ENCODE measurements at regions of chr1 and their contacts with region 1.

Region 1: DNA sequence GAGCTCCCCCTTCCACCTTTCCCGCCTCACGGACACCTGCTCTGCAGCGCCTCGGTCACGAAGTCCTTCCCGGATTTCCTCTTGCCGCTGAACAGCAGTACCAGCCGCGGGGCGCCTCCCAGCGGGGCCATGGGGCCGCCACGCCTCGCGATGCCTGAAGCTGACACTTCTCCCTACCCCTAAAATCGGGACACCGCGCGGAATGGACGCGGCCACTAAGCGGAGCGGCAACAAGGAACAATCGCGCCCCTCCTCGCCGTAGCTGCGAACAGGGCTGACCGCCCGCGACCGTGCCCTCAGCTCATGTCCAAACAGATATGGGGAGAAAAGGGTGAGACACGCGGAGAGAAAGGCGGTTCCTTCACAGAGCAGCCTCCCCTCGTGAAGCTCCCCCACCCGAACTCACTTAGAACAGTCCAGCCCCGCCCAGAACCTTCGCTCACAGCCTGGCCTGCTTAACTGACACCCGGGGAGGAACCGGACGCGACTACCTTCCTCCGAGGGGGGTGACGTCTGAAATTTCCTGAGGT is at the start of gene PMVK:
- DNase-seq: peak; percentile 96

Region 2: DNA sequence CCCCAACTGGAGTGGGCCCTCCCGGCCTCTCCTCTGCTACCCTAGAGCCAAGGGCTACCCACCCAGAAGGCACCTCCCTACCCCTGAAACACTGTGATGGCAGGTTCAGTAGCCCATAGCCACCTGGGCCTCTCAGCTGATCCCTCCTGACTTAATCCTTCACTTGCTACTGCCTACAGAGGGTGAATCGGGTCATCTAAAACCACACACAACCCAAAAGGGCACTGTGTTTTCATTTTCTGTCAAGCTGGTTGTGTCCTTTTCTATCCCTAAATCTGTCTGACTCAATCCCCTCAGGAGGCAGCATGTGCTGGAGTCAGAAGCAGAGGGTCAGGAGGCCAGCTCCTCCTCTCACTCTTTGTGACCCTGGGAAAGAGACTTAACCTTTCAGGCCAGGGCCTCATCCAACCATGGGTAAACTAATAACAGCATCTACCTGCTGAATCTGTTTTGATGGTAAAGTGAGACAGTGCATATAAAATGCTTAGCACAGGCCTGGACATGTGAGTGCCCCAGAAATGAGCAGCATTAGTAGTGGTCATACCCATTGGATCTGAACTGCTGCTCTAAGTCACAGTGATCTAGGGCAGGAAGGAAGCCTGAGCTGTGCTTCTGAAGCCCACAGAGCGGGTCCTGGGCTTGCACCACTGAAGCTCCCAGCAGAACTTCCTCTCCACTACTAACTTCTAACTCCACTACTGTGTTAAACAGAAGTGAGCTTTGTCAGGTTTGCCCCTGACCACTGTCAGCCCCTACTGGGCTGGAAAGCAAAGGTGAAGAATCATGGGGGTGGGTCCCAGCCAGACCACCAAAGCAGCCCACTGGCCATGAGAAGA is 11.1 kb before region 1 on chr1:
- CTCF ChIA-PET with region 1: interaction called, 4 read pairs
- POLR2A ChIA-PET with region 1: interaction called, 11 read pairs
- DNase-seq: no peak

Region 3: GRCh38 chr1:154955718-154956543 is 19.3 kb after region 1 on chr1 and contains the start of gene PBXIP1:
- CTCF ChIA-PET with region 1: interaction called, 4 read pairs
- POLR2A ChIA-PET with region 1: interaction called, 10 read pairs
- DNase-seq: peak; percentile 95

Region 4: DNA sequence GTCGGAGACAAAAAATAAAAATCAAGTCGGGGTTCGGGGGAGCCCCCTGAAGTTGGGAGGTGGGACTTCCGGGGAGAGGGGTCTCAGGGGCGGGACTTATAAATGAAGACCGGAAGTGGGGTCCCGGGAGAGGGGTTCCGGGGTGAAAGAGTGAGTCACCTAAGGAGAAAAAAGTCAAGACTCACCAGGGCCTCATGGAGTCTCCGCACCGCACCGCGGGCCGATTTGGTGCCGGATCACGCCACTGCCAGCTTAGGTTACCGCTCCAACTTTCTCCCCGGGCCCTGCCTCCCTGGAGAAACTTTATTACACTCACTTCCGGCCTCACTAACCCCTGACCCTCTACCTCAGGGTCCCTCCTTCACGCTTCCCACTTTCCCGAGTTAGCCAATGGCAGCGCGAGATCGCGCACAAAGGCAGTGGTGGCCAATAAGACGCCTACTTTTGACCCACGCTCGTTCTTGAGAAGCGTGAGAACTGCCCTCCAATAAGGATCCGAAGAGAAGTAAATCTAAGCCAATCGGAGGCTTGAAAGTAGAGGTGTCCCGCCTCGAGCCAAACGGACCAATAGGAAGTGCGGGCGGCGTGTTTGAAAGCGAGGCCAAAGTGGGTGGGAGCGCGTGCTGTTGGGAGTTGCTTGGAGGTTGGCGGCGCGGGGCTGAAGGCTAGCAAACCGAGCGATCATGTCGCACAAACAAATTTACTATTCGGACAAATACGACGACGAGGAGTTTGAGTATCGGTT is 37.6 kb after region 1 on chr1 and contains the start of gene CKS1B:
- CTCF ChIA-PET with region 1: interaction called, 3 read pairs
- POLR2A ChIA-PET with region 1: interaction called, 10 read pairs
- DNase-seq: peak; percentile 94

Measured in HEK293T (cell line).